ENCODE measurements at regions of chr9 and their contacts with region 1.

Region 1: GRCh38 chr9:28792736-28793135 is 1219.5 kb upstream of the C9orf72 start:
- DNase-seq: no peak
- ATAC-seq: no peak
- H3K4me3 ChIP-seq: no peak overlapping the region
- H3K27ac ChIP-seq: no peak overlapping the region
- H3K4me1 ChIP-seq: no peaks in the 10 kb centered on the region
- H3K27me3 ChIP-seq: no peaks in the 10 kb centered on the region
- CTCF ChIP-seq: no peak
- EP300 ChIP-seq: no peak
- POLR2A ChIP-seq: no peak
- RAD21 ChIP-seq: no peak

Region 2: GRCh38 chr9:28810375-28811075 is 17.8 kb after region 1 on chr9:
- CTCF ChIA-PET with region 1: no interaction called
- POLR2A ChIA-PET with region 1: no interaction called
- RAD21 ChIA-PET with region 1: no interaction called
- SMC1A ChIA-PET with region 1: no interaction called
- in situ Hi-C with region 1: no loop called
- intact Hi-C with region 1: loop called (anchors 2 kb)
- DNase-seq: no peak
- ATAC-seq: no peak
- H3K4me3 ChIP-seq: no peak overlapping the region
- H3K27ac ChIP-seq: no peak overlapping the region
- H3K4me1 ChIP-seq: no peaks in the 10 kb centered on the region
- H3K27me3 ChIP-seq: no peaks in the 10 kb centered on the region
- CTCF ChIP-seq: no peak
- EP300 ChIP-seq: no peak
- POLR2A ChIP-seq: no peak
- RAD21 ChIP-seq: no peak